Prostate gland (tissue), 2 donors: ENCODE measurements at regions of chr1 and their contacts with region 1.

Region 1: DNA sequence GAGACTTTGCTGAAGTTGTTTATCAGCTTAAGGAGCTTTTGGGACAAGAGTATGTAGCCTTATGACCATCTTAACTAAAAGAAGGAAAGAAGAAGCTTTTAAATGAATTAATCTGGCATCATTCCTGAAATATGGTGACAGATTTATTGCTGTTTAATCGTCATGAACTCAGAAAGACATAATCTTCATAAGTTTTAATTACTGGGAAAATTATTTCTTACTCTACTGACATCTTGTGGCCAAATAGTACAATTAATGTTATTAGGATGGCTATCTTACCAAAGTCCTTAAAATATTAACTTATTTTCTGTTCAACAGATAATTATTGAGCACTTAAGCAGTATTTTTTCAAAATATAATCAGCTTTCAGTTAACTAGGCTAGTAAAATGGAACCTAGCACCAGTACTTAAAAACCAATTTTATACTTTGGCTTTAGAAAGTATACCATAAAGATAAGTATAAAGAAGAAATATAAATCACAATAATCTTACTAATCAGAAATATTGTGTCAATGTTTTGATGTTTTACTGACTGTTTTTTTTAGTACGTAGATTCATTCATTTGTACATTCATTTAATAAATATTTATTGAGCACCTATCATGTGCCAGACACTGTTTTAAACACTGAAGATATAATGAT is 34.7 kb upstream of the GPR25 start:
- DNase-seq: no peak
- H3K4me3 ChIP-seq: no peak overlapping the region
- H3K27ac ChIP-seq: no peak overlapping the region
- H3K4me1 ChIP-seq: no peaks in the 10 kb centered on the region
- H3K27me3 ChIP-seq: no peaks in the 10 kb centered on the region
- CTCF ChIP-seq: peak in 3 of 4 experiments; percentile 42 to 58 (median 51)
- POLR2A ChIP-seq: no peak

Region 2: GRCh38 chr1:200620273-200621131 is 217.5 kb before region 1 on chr1 and contains the start of gene KIF14:
- intact Hi-C with region 1: loop called (anchors 5 kb)
- DNase-seq: peak; percentile 88
- H3K4me3 ChIP-seq: peak within 1 kb of the TSS; percentile 47 to 55
- H3K27ac ChIP-seq: peak within 1 kb of the TSS; percentile 29 to 48
- H3K4me1 ChIP-seq: no peaks in the 10 kb centered on the region
- H3K27me3 ChIP-seq: no peaks in the 10 kb centered on the region
- CTCF ChIP-seq: peak in 1 of 4 experiments; percentile 22
- POLR2A ChIP-seq: no peak
- total RNA-seq, gene KIF14: 0.23 to 1.7 TPM